Left lung (tissue), 14 donors: ENCODE measurements at regions of chr6 and their contacts with region 1.

Region 1: DNA sequence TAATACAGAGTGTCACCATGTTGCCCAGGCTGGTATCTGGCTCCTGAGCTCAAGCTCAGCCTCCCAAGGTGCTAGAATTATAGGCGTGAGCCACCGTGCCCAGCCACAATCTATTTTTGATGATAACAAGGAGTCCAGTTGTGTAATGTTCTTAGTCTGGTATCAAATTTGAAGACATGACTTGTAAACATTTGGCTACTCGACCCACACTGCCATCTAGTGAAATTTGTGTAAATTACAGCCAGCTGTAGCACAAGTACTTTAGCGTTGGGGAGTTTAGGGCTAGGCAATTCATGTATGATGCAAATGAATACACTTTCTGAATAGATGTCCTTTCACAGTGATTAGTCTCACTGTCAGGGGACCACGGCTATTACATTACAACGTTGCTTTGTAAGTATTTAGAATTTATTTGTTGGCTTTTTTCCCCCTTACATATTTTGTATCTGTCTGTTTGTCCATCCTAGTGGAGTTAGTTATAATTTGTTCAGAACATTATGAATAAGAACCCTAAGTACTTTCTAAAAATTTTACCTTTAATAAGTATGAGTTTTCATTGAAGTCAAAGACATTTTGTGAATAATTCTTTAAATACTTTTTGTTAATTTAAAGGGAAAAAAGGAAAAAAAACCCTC is 139.7 kb downstream of the PRDM13 start:
- DNase-seq: peak in 2 of 4 donors; percentile 49 to 69
- ATAC-seq: peak; percentile 98
- H3K4me3 ChIP-seq: no peak overlapping the region
- H3K27ac ChIP-seq: no peak overlapping the region
- H3K4me1 ChIP-seq: no peaks in the 10 kb centered on the region
- H3K27me3 ChIP-seq: peaks cover 0 to 35% of the 10 kb centered on the region in 2 donors
- CTCF ChIP-seq: peak; percentile 80 to 91

Region 2: GRCh38 chr6:99349171-99350141 is 396.9 kb before region 1 on chr6 and contains the start of gene FAXC:
- intact Hi-C with region 1: loop called in 1 of 2 experiments (anchors 10 kb)
- DNase-seq: peak; percentile 24 to 88 (median 54)
- ATAC-seq: peak; percentile 94
- H3K4me3 ChIP-seq: peak within 1 kb of the TSS; percentile 50 to 64
- H3K27ac ChIP-seq: peak within 1 kb of the TSS in 1 of 2 donors; percentile 65
- H3K4me1 ChIP-seq: peaks cover 0 to 5% of the 10 kb centered on the region in 2 donors
- H3K27me3 ChIP-seq: peaks cover 5 to 80% of the 10 kb centered on the region in 2 donors
- CTCF ChIP-seq: no peak
- polyA plus RNA-seq, gene FAXC: 7.9 to 12.7 (median 8.6) TPM